CD8-positive, alpha-beta memory T cell (primary cell): ENCODE measurements at regions of chr10 and their contacts with region 1.

Region 1: GRCh38 chr10:104274762-104275721 is 6.1 kb downstream of the GSTO2 start:
- DNase-seq: peak in 4 of 5 donors; percentile 18 to 51 (median 35)
- H3K4me3 ChIP-seq: no peak overlapping the region
- H3K4me3 Mint-ChIP-seq: peak overlapping the region in 3 of 7 donors; percentile 15 to 52 (median 20)
- H3K27ac ChIP-seq: no peak overlapping the region
- H3K27ac Mint-ChIP-seq: no peak overlapping the region
- H3K4me1 ChIP-seq: peaks cover 3% of the 10 kb centered on the region
- H3K4me1 Mint-ChIP-seq: peaks cover 0 to 6% (median 0%) of the 10 kb centered on the region in 3 donors
- H3K27me3 ChIP-seq: no peaks in the 10 kb centered on the region
- H3K27me3 Mint-ChIP-seq: peaks cover 8 to 35% of the 10 kb centered on the region in 2 donors

Region 2: GRCh38 chr10:104254493-104255310 is 20.3 kb before region 1 on chr10 and contains the start of gene GSTO1:
- CTCF ChIA-PET with region 1: interaction called, 57 read pairs
- POLR2A ChIA-PET with region 1: interaction called, 3 read pairs
- DNase-seq: peak; percentile 40 to 70 (median 47)
- H3K4me3 ChIP-seq: peak within 1 kb of the TSS; percentile 64
- H3K4me3 Mint-ChIP-seq: peak within 1 kb of the TSS; percentile 91 to 99 (median 95)
- H3K27ac ChIP-seq: peak within 1 kb of the TSS; percentile 76
- H3K27ac Mint-ChIP-seq: peak within 1 kb of the TSS; percentile 84 to 99 (median 96)
- H3K4me1 ChIP-seq: peaks cover 41% of the 10 kb centered on the region
- H3K4me1 Mint-ChIP-seq: peaks cover 34 to 53% (median 49%) of the 10 kb centered on the region in 3 donors
- H3K27me3 ChIP-seq: no peaks in the 10 kb centered on the region
- H3K27me3 Mint-ChIP-seq: peaks cover 8 to 11% of the 10 kb centered on the region in 2 donors
- total RNA-seq, gene GSTO1: 122 TPM

Region 3: DNA sequence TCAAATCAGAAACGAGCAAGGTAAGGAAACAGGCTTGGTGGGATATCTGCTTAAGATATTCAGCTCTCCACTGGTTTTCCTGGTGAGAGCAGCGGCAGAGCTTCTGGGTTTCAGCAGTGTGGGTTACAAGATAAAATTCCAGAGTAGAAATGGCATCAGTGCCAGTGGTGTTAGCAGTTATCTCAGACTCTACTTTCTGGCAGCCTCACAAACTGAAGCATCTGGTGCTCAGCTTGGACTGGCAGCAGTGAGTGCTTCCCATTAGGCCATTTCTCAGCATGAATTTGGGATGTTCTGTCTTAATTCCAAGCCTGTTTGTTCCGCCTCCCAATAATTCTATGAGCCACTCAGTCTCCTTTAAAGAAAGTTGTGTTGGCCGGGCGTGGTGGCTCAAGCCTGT is 13.0 kb before region 1 on chr10:
- CTCF ChIA-PET with region 1: interaction called, 57 read pairs
- POLR2A ChIA-PET with region 1: no interaction called
- DNase-seq: no peak
- H3K4me3 ChIP-seq: no peak overlapping the region
- H3K4me3 Mint-ChIP-seq: no peak overlapping the region
- H3K27ac ChIP-seq: no peak overlapping the region
- H3K27ac Mint-ChIP-seq: peak overlapping the region in 6 of 8 donors; percentile 15 to 83 (median 72)
- H3K4me1 ChIP-seq: peaks cover 70% of the 10 kb centered on the region
- H3K4me1 Mint-ChIP-seq: peaks cover 70 to 96% (median 84%) of the 10 kb centered on the region in 3 donors
- H3K27me3 ChIP-seq: no peaks in the 10 kb centered on the region
- H3K27me3 Mint-ChIP-seq: no peaks in the 10 kb centered on the region

Region 4: DNA sequence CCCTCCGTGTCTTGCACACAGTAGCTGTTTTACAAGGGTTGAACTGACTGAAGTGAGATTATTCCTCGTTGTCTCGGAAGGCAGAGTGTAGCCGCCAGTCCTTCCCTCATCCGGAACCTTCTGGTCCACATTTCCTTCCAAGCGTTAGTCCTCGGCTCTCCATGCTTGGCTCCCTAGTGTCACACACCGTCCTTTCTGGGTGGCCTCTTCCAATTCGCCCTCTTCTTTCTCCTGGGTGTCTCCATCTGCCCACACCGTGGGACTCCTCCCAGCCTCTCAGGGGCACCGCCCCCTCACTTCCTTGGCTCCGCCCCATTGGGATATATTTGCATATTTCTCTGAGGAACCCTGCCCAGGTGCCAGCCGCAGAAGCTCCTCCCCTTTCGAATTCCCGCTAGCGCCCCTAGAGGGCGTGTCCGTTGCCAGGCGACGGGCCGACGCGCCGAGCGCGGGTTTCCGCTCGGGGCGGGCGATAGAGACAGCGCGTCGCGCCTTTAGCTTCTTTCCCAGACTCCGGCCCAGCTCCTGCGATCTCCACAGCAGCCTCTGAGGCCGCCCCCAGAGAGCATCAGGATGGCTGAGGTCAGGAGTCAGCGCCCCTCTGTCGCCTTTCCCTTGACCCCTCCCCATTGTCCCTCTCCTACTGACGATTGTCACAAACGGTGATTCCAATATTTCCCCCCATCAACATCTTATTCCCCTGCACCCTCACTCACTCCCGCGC is 78.4 kb after region 1 on chr10 and contains the start of gene CFAP58:
- CTCF ChIA-PET with region 1: interaction called, 25 read pairs
- POLR2A ChIA-PET with region 1: interaction called, 4 read pairs
- DNase-seq: peak; percentile 87 to 93 (median 88)
- H3K4me3 ChIP-seq: peak within 1 kb of the TSS; percentile 67
- H3K4me3 Mint-ChIP-seq: peak within 1 kb of the TSS in 2 of 7 donors; percentile 75 to 81
- H3K27ac ChIP-seq: no peak within 1 kb of the TSS
- H3K27ac Mint-ChIP-seq: peak within 1 kb of the TSS in 5 of 8 donors; percentile 13 to 87 (median 84)
- H3K4me1 ChIP-seq: peaks cover 20% of the 10 kb centered on the region
- H3K4me1 Mint-ChIP-seq: peaks cover 0 to 20% (median 0%) of the 10 kb centered on the region in 3 donors
- H3K27me3 ChIP-seq: no peaks in the 10 kb centered on the region
- H3K27me3 Mint-ChIP-seq: no peaks in the 10 kb centered on the region
- total RNA-seq, gene CFAP58: 0.07 TPM in 1 of 2 experiments, not detected in the other